Aorta (tissue), 5 donors: ENCODE measurements at regions of chr16 and their contacts with region 1.

Region 1: GRCh38 chr16:72989579-72990551 is 58.1 kb downstream of the ZFHX3 start:
- DNase-seq: peak; percentile 68 to 81
- ATAC-seq: peak; percentile 83
- H3K4me3 ChIP-seq: no peak overlapping the region
- H3K27ac ChIP-seq: peak overlapping the region; percentile 72 to 95
- H3K4me1 ChIP-seq: peaks cover 4 to 7% of the 10 kb centered on the region in 2 donors
- H3K27me3 ChIP-seq: no peaks in the 10 kb centered on the region

Region 2: GRCh38 chr16:72952811-72953595 is 36.9 kb before region 1 on chr16:
- intact Hi-C with region 1: loop called in 1 of 2 experiments (anchors 5 kb)
- DNase-seq: peak in 1 of 2 donors; percentile 7
- ATAC-seq: no peak
- H3K4me3 ChIP-seq: no peak overlapping the region
- H3K27ac ChIP-seq: peak overlapping the region in 1 of 2 donors; percentile 5
- H3K4me1 ChIP-seq: no peaks in the 10 kb centered on the region
- H3K27me3 ChIP-seq: no peaks in the 10 kb centered on the region

Region 3: GRCh38 chr16:73020362-73020884 is 30.6 kb after region 1 on chr16:
- intact Hi-C with region 1: loop called in 1 of 2 experiments (anchors 5 kb)
- DNase-seq: peak; percentile 84 to 92
- ATAC-seq: peak; percentile 79
- H3K4me3 ChIP-seq: no peak overlapping the region
- H3K27ac ChIP-seq: peak overlapping the region in 1 of 2 donors; percentile 0
- H3K4me1 ChIP-seq: peaks cover 4 to 5% of the 10 kb centered on the region in 2 donors
- H3K27me3 ChIP-seq: no peaks in the 10 kb centered on the region

Region 4: GRCh38 chr16:73058221-73058615 is 68.4 kb after region 1 on chr16:
- intact Hi-C with region 1: loop called in 1 of 2 experiments (anchors 5 kb)
- DNase-seq: peak; percentile 73 to 84
- ATAC-seq: no peak
- H3K4me3 ChIP-seq: peak overlapping the region; percentile 77 to 100
- H3K27ac ChIP-seq: peak overlapping the region; percentile 92 to 100
- H3K4me1 ChIP-seq: no peaks in the 10 kb centered on the region
- H3K27me3 ChIP-seq: no peaks in the 10 kb centered on the region

Region 5: GRCh38 chr16:73289232-73289631 is 299.4 kb after region 1 on chr16:
- intact Hi-C with region 1: no loop called
- DNase-seq: no peak
- ATAC-seq: no peak
- H3K4me3 ChIP-seq: no peak overlapping the region
- H3K27ac ChIP-seq: no peak overlapping the region
- H3K4me1 ChIP-seq: no peaks in the 10 kb centered on the region
- H3K27me3 ChIP-seq: no peaks in the 10 kb centered on the region